Activated B cell treated with CpG ODN at 0.5 μM for 24 hours (primary cell): ENCODE measurements at regions of chr12 and their contacts with region 1.

Region 1: DNA sequence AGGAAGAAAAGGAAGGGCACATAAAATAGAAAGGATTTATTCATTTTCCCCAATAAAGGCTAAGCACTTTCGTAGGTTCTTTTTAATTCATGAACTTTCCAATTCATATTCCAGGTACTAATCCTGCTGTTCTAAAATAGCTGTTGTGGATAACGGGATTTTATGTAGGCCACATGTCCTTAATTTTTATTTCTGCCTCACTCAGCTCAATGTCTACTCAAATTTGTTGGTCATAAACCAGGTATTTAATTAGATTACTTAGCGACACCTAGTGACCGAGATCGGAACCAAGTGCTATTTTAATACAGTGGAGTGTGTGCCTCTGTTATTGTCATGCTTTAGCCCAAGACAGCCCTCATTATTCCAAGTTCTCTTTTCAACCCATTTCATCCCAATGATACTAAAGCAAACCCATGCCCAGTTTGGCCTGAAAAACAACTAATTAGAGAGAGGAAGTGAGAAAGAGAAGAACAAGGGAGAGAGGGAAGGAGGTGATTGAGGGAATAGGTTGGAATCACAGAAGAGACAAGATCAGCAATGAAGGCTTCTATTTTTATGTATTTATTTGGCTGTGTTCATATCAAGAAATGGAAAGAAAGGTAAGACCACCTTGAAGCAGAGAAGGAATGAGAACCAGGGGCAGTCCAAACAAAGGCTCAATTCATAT is 45.9 kb upstream of the IFNG-AS1 start:
- DNase-seq: no peak
- ATAC-seq: peak; percentile 67
- H3K4me3 Mint-ChIP-seq: no peak overlapping the region
- H3K27ac Mint-ChIP-seq: no peak overlapping the region
- H3K4me1 Mint-ChIP-seq: peaks cover 2% of the 10 kb centered on the region
- H3K27me3 Mint-ChIP-seq: peaks cover 3% of the 10 kb centered on the region
- CTCF ChIP-seq: no peak

Region 2: DNA sequence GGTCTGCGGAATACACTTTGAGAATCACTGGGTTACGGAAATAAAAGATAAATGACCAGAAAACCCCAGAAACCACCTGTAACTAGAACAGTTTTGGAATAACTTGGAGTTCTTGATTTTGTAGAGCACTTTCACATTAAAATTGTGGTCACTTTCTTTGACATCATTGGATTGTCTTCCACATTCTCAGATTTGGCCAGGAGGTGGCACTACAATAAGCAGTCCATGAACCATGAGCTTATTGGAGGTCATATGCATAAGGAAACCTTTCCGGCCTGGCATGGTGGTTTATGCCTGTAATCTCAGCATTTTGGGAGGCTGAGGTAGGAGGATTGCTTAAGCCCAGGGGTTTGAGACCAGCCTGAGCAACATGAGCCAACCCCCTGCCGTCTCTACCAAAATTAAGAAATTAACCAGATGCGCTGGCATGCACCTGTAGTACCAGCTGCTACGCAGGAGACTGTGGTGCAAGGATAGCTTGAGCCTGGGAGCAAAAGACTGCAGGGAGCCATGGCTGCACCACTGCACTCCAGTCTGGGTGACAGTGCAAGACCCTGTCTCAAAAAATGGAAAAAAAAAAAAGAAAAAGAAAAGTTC is 781.9 kb before region 1 on chr12:
- CTCF ChIA-PET with region 1: interaction called, 13 read pairs
- POLR2A ChIA-PET with region 1: no interaction called
- intact Hi-C with region 1: loop called (anchors 1 kb)
- DNase-seq: no peak
- ATAC-seq: no peak
- H3K4me3 Mint-ChIP-seq: no peak overlapping the region
- H3K27ac Mint-ChIP-seq: no peak overlapping the region
- H3K4me1 Mint-ChIP-seq: no peaks in the 10 kb centered on the region
- H3K27me3 Mint-ChIP-seq: peaks cover 7% of the 10 kb centered on the region
- CTCF ChIP-seq: no peak

Region 3: DNA sequence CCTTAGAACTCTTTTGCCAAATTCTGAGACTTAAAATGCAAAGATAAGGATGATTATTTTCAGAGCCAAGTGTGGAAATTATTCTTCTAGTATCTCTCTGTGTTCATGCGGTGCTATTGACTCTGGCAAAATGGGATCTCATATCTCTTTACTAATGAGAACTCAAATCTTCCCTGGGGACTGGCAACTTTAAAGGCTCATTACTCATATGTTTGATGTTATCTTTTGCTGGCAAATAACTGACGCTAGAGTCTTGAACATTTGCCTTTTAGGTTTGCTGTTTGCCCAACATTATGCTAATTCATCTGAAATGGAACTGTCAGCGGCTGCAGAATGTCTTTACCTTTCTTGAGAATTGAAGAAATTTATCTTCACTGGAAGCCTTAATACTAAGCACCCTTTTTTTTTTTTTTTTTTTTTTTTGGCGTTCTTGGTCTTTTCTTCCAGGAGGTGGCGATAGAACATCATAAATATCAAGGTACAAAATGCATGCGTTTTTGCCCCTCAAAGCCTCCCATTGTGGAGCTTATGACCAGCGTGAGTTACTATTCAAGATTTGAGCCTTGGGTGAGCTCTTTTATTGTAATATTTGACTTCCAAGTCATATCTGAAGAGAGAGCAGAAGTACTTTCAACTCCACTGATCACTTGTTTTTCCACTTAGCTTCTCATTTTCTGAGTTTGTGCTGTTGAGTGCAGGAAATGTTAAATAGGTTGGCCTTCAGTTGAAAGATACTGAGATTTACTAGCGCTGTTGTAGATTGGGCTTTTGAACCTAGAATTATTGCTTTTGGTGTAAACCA is 587.6 kb before region 1 on chr12:
- CTCF ChIA-PET with region 1: interaction called, 219 read pairs
- POLR2A ChIA-PET with region 1: interaction called, 13 read pairs
- intact Hi-C with region 1: loop called (anchors 1 kb)
- DNase-seq: no peak
- ATAC-seq: peak; percentile 54
- H3K4me3 Mint-ChIP-seq: no peak overlapping the region
- H3K27ac Mint-ChIP-seq: no peak overlapping the region
- H3K4me1 Mint-ChIP-seq: peaks cover 5% of the 10 kb centered on the region
- H3K27me3 Mint-ChIP-seq: no peaks in the 10 kb centered on the region
- CTCF ChIP-seq: no peak

Region 4: GRCh38 chr12:67441736-67442346 is 501.5 kb before region 1 on chr12:
- CTCF ChIA-PET with region 1: interaction called, 5 read pairs
- POLR2A ChIA-PET with region 1: no interaction called
- intact Hi-C with region 1: loop called (anchors 1 kb)
- DNase-seq: peak; percentile 56
- ATAC-seq: peak; percentile 93
- H3K4me3 Mint-ChIP-seq: peak overlapping the region; percentile 5
- H3K27ac Mint-ChIP-seq: no peak overlapping the region
- H3K4me1 Mint-ChIP-seq: peaks cover 8% of the 10 kb centered on the region
- H3K27me3 Mint-ChIP-seq: peaks cover 3% of the 10 kb centered on the region
- CTCF ChIP-seq: no peak

Region 5: DNA sequence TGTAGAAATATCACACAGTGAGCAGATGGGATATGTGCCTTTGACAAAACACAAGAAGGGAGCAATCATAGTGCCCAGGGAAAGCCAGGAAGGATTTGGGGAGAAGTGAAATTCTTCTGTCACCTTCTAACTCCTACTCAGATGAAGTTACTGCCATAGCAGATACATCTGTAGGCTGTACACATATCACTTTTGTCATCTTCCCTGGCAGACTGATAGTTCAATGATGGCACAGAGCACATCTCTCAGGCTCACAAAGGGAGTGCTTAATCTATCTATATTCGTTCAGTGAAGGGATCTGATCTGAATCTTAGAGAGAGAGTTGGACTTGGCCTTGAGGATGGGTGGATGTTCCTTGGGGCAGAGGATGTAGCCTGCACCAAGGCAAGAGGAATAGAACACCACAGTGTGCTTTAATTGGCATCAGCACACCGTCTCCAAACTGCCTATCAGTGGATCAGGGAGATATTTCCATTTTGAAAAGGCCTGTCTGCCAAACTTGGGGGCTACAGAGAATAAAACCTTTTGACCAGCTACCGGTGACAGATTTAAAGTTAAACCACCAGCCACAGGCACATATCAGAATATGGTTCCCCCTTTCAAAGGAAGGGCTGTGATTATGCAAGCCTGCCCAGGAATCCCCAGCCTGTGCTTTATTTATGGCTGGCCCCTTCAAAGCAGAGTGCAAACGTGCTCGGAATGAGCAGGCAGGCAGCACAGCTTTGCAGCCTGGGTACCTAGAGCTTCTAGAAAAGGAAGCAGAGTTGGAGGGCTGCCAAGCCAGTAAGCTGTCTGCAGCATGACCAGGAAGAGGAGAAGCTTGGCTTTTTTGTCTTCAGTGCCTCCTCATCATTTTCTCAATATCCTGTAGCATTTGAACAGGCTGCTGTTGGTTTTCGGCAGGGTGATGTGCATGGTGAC is 460.3 kb before region 1 on chr12:
- CTCF ChIA-PET with region 1: no interaction called
- POLR2A ChIA-PET with region 1: no interaction called
- intact Hi-C with region 1: loop called (anchors 5 kb)
- DNase-seq: no peak
- ATAC-seq: peak; percentile 64
- H3K4me3 Mint-ChIP-seq: no peak overlapping the region
- H3K27ac Mint-ChIP-seq: no peak overlapping the region
- H3K4me1 Mint-ChIP-seq: peaks cover 24% of the 10 kb centered on the region
- H3K27me3 Mint-ChIP-seq: no peaks in the 10 kb centered on the region
- CTCF ChIP-seq: no peak

Region 6: GRCh38 chr12:67758119-67758518 is 185.2 kb before region 1 on chr12:
- CTCF ChIA-PET with region 1: no interaction called
- POLR2A ChIA-PET with region 1: no interaction called
- intact Hi-C with region 1: loop called (anchors 5 kb)
- DNase-seq: no peak
- ATAC-seq: peak; percentile 95
- H3K4me3 Mint-ChIP-seq: no peak overlapping the region
- H3K27ac Mint-ChIP-seq: no peak overlapping the region
- H3K4me1 Mint-ChIP-seq: peaks cover 25% of the 10 kb centered on the region
- H3K27me3 Mint-ChIP-seq: no peaks in the 10 kb centered on the region
- CTCF ChIP-seq: no peak